Activated CD4-positive, alpha-beta T cell treated with anti-CD3 and anti-CD28 coated beads, Interleukin-2, amount 10 ng/mL, durations not matched to agents 24 days and 14 days (primary cell): ENCODE measurements at regions of chr7 and their contacts with region 1.

Region 1: GRCh38 chr7:142797386-142798377 is 26.9 kb downstream of the PRSS2 start:
- DNase-seq: peak; percentile 78
- H3K4me3 Mint-ChIP-seq: peak overlapping the region; percentile 100
- H3K27ac Mint-ChIP-seq: peak overlapping the region; percentile 99
- H3K4me1 Mint-ChIP-seq: peaks cover 70% of the 10 kb centered on the region
- H3K27me3 Mint-ChIP-seq: no peaks in the 10 kb centered on the region

Region 2: GRCh38 chr7:142614116-142614515 is 183.6 kb before region 1 on chr7:
- intact Hi-C with region 1: loop called (anchors 2 kb)
- DNase-seq: no peak
- H3K4me3 Mint-ChIP-seq: no peak overlapping the region
- H3K27ac Mint-ChIP-seq: no peak overlapping the region
- H3K4me1 Mint-ChIP-seq: peaks cover 7% of the 10 kb centered on the region
- H3K27me3 Mint-ChIP-seq: peaks cover 24% of the 10 kb centered on the region